GM12878 (cell line): ENCODE measurements at regions of chr1 and their contacts with region 1.

Region 1: GRCh38 chr1:198903203-198903602 is 264.4 kb downstream of the PTPRC start:
- DNase-seq: no peak
- ATAC-seq: no peak; the same call in 2 of the 3 replicates
- H3K4me3 ChIP-seq: no peak overlapping the region
- H3K27ac ChIP-seq: no peak overlapping the region
- H3K4me1 ChIP-seq: peaks cover 2% of the 10 kb centered on the region; the same call in 1 of the 2 replicates
- H3K27me3 ChIP-seq: no peaks in the 10 kb centered on the region
- CTCF ChIP-seq: no peak
- EP300 ChIP-seq: no peak
- POLR2A ChIP-seq: no peak
- RAD21 ChIP-seq: no peak

Region 2: DNA sequence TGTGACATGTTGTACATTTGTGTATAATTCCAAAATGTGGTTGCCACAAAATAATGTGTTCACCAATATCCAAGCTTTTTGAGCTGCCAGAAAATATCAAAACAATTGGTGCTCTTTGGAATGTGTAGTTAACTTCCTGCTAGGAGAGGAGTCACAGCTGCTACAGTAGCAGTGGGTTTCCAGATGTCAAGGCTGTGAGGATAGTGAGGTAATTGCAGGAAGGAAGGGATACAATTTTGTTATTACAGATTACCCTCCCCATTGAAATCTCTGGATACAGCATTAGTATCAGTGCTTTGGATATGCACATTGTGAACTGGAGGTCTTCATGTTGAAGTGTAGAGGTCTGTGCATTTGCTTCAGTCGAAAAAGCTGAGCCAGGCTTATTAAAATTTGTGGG is 11.1 kb before region 1 on chr1:
- CTCF ChIA-PET with region 1: interaction called, 10 read pairs
- POLR2A ChIA-PET with region 1: interaction called, 3 read pairs
- RAD21 ChIA-PET with region 1: interaction called, 9 read pairs
- SMC1A ChIA-PET with region 1: interaction called, 15 read pairs
- in situ Hi-C with region 1: no loop called
- intact Hi-C with region 1: no loop called
- DNase-seq: no peak
- ATAC-seq: no peak
- H3K4me3 ChIP-seq: no peak overlapping the region
- H3K27ac ChIP-seq: no peak overlapping the region
- H3K4me1 ChIP-seq: no peaks in the 10 kb centered on the region
- H3K27me3 ChIP-seq: no peaks in the 10 kb centered on the region
- CTCF ChIP-seq: no peak
- EP300 ChIP-seq: no peak
- POLR2A ChIP-seq: no peak
- RAD21 ChIP-seq: no peak

Region 3: DNA sequence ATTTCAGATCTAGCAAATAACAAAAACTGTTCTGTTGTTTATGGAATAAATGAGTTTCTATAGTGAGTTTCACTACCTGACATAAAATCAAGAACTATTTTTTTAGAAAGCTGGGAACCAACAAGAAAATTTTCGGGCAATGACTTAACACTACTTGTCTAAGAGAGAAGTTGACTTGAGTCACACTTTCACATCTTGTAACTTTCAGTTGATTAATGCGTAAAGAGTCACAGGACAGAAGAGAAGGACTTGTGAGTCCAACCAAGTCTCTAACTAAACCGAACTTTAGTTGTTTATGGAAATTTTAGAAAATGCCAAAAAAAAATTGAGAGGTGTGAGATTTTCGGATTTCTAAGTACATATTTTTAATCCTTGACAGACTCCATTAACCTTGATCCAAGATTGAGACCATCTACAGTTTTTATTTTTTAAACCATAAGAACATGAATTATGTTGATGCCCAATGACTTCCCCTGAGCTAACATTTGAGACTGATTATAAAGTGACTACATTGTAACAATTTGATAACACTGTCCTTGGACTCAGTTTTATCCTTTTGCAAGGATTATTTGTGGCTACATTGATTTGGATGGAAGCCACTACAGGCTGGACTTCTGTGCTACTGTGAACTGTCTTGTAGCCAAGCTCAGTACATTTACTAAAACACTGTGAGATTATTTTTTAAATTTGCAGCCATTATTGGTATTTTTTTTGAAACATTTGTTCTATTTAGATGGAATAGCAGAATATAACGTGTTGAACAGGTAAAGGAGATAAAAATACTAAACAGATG is 19.6 kb after region 1 on chr1:
- CTCF ChIA-PET with region 1: interaction called, 3 read pairs
- POLR2A ChIA-PET with region 1: interaction called, 3 read pairs
- RAD21 ChIA-PET with region 1: interaction called, 7 read pairs
- SMC1A ChIA-PET with region 1: interaction called, 49 read pairs
- in situ Hi-C with region 1: no loop called
- intact Hi-C with region 1: no loop called
- DNase-seq: peak; percentile 71
- ATAC-seq: peak; percentile 82
- H3K4me3 ChIP-seq: no peak overlapping the region
- H3K27ac ChIP-seq: peak overlapping the region; percentile 42
- H3K4me1 ChIP-seq: peaks cover 20% of the 10 kb centered on the region
- H3K27me3 ChIP-seq: no peaks in the 10 kb centered on the region
- CTCF ChIP-seq: no peak
- EP300 ChIP-seq: peak; percentile 66 to 77; a peak in 3 of 4 replicates
- POLR2A ChIP-seq: no peak
- RAD21 ChIP-seq: peak; percentile 13; the same call in 1 of the 2 replicates